Common myeloid progenitor, CD34-positive (primary cell): ENCODE measurements at regions of chr1 and their contacts with region 1.

Region 1: GRCh38 chr1:20633190-20634064 is at the start of gene PINK1:
- DNase-seq: peak; percentile 77 to 85 (median 84)
- H3K4me3 ChIP-seq: peak within 1 kb of the TSS; percentile 80 to 95 (median 86)
- H3K27ac ChIP-seq: peak within 1 kb of the TSS; percentile 50 to 78
- H3K4me1 ChIP-seq: peaks cover 6 to 15% (median 11%) of the 10 kb centered on the region in 4 experiments
- H3K27me3 ChIP-seq: no peaks in the 10 kb centered on the region

Region 2: GRCh38 chr1:20521960-20522861 is 111.2 kb before region 1 on chr1:
- CTCF ChIA-PET with region 1: interaction called, 33 read pairs
- POLR2A ChIA-PET with region 1: no interaction called
- DNase-seq: peak; percentile 79 to 88 (median 84)
- H3K4me3 ChIP-seq: no peak overlapping the region
- H3K27ac ChIP-seq: no peak overlapping the region
- H3K4me1 ChIP-seq: no peaks in the 10 kb centered on the region
- H3K27me3 ChIP-seq: peaks cover 0 to 9% (median 3%) of the 10 kb centered on the region in 5 experiments

Region 3: DNA sequence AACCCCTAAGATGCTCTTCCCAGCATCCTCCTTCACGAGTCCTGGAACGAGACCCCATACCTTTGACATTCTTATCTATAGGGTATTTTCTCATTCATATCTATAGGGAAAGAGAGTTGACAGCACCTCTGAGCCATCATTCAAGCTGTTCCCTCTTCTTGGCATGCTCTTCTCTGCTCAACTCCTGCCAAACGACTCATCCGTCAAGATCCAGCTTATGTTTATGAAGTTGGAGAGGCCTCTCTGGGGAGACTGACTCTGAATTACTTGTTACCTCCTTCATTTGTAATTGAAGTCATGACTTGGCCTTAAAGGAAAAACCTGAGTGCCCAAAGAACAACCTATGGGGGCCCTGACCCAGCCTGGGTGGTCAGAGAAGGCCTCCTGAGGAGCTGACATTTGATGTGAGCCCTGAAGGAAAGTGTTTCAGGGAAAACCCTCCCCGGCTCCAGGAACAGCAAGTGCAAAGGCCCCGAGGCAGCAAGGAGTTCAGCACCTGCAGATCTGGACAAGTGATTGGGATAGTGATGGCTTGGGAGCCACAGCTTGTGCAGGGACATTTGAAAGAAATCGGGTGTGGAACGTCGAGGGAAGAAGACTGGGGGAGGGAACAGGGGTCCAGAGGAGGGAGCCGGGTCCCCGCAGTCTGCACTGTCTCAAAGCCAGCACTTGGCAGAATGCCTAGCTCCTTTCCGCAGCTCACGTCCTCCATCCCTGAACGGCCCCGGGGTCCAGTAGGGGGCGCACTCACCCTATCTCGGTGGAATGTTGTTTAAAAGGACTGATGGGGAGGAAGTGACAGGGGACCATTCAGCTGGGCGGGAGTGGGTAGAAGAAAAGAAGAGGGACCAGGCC is 58.5 kb before region 1 on chr1:
- CTCF ChIA-PET with region 1: interaction called, 44 read pairs
- POLR2A ChIA-PET with region 1: interaction called, 6 read pairs
- DNase-seq: peak; percentile 87 to 93 (median 90)
- H3K4me3 ChIP-seq: no peak overlapping the region
- H3K27ac ChIP-seq: no peak overlapping the region
- H3K4me1 ChIP-seq: peaks cover 0 to 2% (median 0%) of the 10 kb centered on the region in 4 experiments
- H3K27me3 ChIP-seq: peaks cover 0 to 18% (median 2%) of the 10 kb centered on the region in 5 experiments

Region 4: GRCh38 chr1:20589331-20590278 is 43.8 kb before region 1 on chr1:
- CTCF ChIA-PET with region 1: interaction called, 11 read pairs
- POLR2A ChIA-PET with region 1: no interaction called
- DNase-seq: peak in 1 of 3 donors; percentile 40
- H3K4me3 ChIP-seq: peak overlapping the region in 5 of 7 experiments; percentile 33 to 65 (median 57)
- H3K27ac ChIP-seq: no peak overlapping the region
- H3K4me1 ChIP-seq: peaks cover 2 to 32% (median 29%) of the 10 kb centered on the region in 4 experiments
- H3K27me3 ChIP-seq: peaks cover 0 to 26% (median 9%) of the 10 kb centered on the region in 5 experiments

Region 5: GRCh38 chr1:20614130-20614580 is 19.3 kb before region 1 on chr1:
- CTCF ChIA-PET with region 1: interaction called, 10 read pairs
- POLR2A ChIA-PET with region 1: no interaction called
- DNase-seq: no peak
- H3K4me3 ChIP-seq: no peak overlapping the region
- H3K27ac ChIP-seq: no peak overlapping the region
- H3K4me1 ChIP-seq: no peaks in the 10 kb centered on the region
- H3K27me3 ChIP-seq: no peaks in the 10 kb centered on the region

Region 6: DNA sequence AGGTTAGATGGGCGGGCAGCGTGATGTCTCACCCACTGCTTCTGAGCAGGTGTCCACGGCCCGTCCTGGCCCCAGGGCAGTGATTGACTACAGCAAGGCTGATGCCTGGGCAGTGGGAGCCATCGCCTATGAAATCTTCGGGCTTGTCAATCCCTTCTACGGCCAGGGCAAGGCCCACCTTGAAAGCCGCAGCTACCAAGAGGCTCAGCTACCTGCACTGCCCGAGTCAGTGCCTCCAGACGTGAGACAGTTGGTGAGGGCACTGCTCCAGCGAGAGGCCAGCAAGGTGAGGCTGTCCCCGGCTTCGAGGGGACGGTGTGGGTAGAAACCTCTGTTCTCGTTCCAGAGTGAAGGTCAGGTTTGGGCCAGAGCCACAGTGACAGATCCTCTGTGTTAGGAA is 15.5 kb after region 1 on chr1:
- CTCF ChIA-PET with region 1: interaction called, 10 read pairs
- POLR2A ChIA-PET with region 1: no interaction called
- DNase-seq: no peak
- H3K4me3 ChIP-seq: no peak overlapping the region
- H3K27ac ChIP-seq: no peak overlapping the region
- H3K4me1 ChIP-seq: no peaks in the 10 kb centered on the region
- H3K27me3 ChIP-seq: no peaks in the 10 kb centered on the region

Region 7: DNA sequence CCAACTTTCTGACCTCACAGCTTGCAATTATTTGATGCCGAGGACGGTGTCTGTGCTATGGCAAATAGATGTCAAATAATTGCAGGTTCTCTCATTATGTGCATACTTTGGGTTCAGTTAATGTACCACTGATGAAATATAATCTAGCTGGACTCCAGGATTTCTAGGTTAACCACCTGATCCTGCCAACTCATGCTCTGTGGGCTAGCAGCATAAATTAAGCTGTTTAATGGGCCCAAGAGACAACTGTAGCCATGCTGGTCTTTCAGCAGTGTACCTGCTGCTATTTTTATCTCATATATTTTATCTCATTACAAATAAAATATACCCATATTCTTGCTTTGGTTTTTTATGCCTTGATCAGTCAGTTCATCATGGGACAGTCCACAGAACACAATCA is 197.0 kb after region 1 on chr1:
- CTCF ChIA-PET with region 1: no interaction called
- POLR2A ChIA-PET with region 1: no interaction called
- DNase-seq: no peak
- H3K4me3 ChIP-seq: no peak overlapping the region
- H3K27ac ChIP-seq: no peak overlapping the region
- H3K4me1 ChIP-seq: no peaks in the 10 kb centered on the region
- H3K27me3 ChIP-seq: no peaks in the 10 kb centered on the region